PC-9 (cell line): ENCODE measurements at regions of chr6 and their contacts with region 1.

Region 1: DNA sequence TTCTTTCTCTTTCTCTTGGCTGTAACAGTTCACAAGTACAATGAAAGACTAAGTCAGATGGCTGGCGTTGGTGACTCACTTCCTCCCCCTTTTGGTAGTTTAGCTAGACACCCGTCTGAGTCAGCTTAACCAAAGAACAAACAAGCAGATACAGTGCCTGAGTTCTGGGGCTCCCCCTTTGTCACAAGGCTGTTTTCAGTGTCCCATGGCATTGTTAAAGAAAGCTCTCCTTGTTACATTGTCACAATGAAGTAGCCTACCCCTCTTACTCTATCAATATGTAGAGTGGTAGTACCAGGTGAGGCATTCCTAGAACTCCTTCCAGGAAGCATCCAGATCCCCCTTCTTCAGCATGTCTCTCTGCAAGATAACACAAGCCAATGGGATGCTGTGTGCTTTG is 38.6 kb downstream of the KIAA0408 start:
- DNase-seq: peak; percentile 56 to 89
- H3K4me3 ChIP-seq: no peak overlapping the region
- H3K27ac ChIP-seq: no peak overlapping the region
- H3K4me1 ChIP-seq: peaks cover 11% of the 10 kb centered on the region
- H3K27me3 ChIP-seq: no peaks in the 10 kb centered on the region
- CTCF ChIP-seq: peak; percentile 66; the same call in 1 of the 2 replicates

Region 2: DNA sequence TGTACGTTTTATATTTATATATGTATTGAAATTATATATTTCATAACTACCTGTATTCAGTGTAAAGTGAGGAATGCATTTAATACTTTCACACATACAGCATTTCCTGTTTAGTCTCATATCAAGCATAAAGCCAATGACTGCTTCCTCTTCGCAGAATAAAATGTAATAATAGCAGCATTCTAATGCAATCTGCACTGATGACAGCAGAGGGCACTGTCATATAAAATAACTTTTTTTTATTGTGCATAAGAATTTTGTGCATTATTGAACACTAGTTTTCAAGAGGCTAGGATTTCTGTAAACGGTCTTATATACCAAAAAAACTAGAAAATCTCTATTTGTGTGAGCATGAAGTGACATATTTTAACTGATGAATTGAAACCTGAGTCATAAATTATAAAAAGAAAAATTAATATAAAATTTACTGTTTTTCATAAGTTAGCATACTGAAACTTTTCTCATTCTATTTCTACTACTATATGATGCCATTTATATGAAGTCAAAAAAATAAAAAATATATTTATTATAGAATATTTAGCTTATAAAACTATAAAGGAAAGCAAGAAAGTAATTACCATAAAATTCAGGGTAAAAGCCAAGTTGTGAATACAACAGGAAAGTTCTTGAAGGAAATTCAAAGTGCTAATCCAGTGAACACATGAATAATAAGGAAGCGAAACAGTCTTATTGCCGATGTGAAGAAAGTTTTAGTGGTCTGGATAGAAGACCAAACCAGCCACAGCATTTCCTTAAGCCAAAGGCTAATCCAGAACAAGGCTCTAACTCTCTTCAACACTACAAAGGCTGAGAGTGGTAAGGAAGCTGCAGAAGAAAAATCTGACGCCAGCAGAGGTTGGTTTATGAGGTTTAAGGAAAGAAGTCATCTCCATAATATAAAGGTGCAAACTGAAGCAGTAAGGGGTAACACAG is 117.6 kb before region 1 on chr6:
- CTCF ChIA-PET with region 1: interaction called, 9 read pairs
- POLR2A ChIA-PET with region 1: no interaction called
- intact Hi-C with region 1: loop called (anchors 2 kb)
- DNase-seq: peak; percentile 18 to 59
- H3K4me3 ChIP-seq: no peak overlapping the region
- H3K27ac ChIP-seq: no peak overlapping the region
- H3K4me1 ChIP-seq: peaks cover 6% of the 10 kb centered on the region; the same call in 1 of the 2 replicates
- H3K27me3 ChIP-seq: no peaks in the 10 kb centered on the region
- CTCF ChIP-seq: peak; percentile 93

Region 3: GRCh38 chr6:127328043-127328609 is 92.4 kb before region 1 on chr6:
- CTCF ChIA-PET with region 1: no interaction called
- POLR2A ChIA-PET with region 1: no interaction called
- intact Hi-C with region 1: loop called (anchors 5 kb)
- DNase-seq: no peak
- H3K4me3 ChIP-seq: no peak overlapping the region
- H3K27ac ChIP-seq: no peak overlapping the region
- H3K4me1 ChIP-seq: no peaks in the 10 kb centered on the region
- H3K27me3 ChIP-seq: no peaks in the 10 kb centered on the region
- CTCF ChIP-seq: no peak

Region 4: GRCh38 chr6:127366281-127367022 is 54.1 kb before region 1 on chr6:
- CTCF ChIA-PET with region 1: no interaction called
- POLR2A ChIA-PET with region 1: no interaction called
- intact Hi-C with region 1: no loop called
- DNase-seq: peak; percentile 74 to 93
- H3K4me3 ChIP-seq: peak overlapping the region; percentile 6; the same call in 1 of the 2 replicates
- H3K27ac ChIP-seq: peak overlapping the region; percentile 67
- H3K4me1 ChIP-seq: peaks cover 22% of the 10 kb centered on the region
- H3K27me3 ChIP-seq: no peaks in the 10 kb centered on the region
- CTCF ChIP-seq: no peak

Region 5: DNA sequence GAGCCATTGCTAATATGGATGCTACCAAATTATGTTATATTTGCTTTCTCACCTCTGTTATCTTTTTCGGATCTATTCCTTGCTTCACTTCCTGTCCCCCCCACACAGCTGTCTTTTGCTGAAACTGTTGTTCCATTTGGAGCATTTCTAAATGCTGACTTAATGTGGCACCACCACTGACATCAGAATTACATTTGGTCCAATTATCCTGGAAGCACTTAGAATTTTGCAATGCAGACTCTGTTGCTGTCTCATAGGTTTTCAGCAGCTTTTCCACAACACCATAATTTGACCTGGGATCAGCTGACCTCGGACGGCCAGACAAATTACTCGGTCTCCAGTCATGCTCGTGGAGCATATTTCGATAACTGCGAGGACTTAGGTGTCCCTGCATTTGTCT is 25.8 kb after region 1 on chr6:
- CTCF ChIA-PET with region 1: no interaction called
- POLR2A ChIA-PET with region 1: no interaction called
- intact Hi-C with region 1: no loop called
- DNase-seq: no peak
- H3K4me3 ChIP-seq: no peak overlapping the region
- H3K27ac ChIP-seq: no peak overlapping the region
- H3K4me1 ChIP-seq: no peaks in the 10 kb centered on the region
- H3K27me3 ChIP-seq: no peaks in the 10 kb centered on the region
- CTCF ChIP-seq: no peak

Region 6: GRCh38 chr6:127484212-127484858 is 63.8 kb after region 1 on chr6:
- CTCF ChIA-PET with region 1: no interaction called
- POLR2A ChIA-PET with region 1: no interaction called
- intact Hi-C with region 1: no loop called
- DNase-seq: peak in 1 of 2 experiments; percentile 83
- H3K4me3 ChIP-seq: peak overlapping the region; percentile 12; the same call in 1 of the 2 replicates
- H3K27ac ChIP-seq: peak overlapping the region; percentile 62
- H3K4me1 ChIP-seq: peaks cover 45% of the 10 kb centered on the region
- H3K27me3 ChIP-seq: no peaks in the 10 kb centered on the region
- CTCF ChIP-seq: no peak

Region 7: GRCh38 chr6:127879685-127880084 is 459.1 kb after region 1 on chr6:
- CTCF ChIA-PET with region 1: no interaction called
- POLR2A ChIA-PET with region 1: no interaction called
- intact Hi-C with region 1: no loop called
- DNase-seq: no peak
- H3K4me3 ChIP-seq: no peak overlapping the region
- H3K27ac ChIP-seq: no peak overlapping the region
- H3K4me1 ChIP-seq: peaks cover 8% of the 10 kb centered on the region; the same call in 1 of the 2 replicates
- H3K27me3 ChIP-seq: no peaks in the 10 kb centered on the region
- CTCF ChIP-seq: no peak